ENCODE measurements at regions of chr15 and their contacts with region 1.

Region 1: DNA sequence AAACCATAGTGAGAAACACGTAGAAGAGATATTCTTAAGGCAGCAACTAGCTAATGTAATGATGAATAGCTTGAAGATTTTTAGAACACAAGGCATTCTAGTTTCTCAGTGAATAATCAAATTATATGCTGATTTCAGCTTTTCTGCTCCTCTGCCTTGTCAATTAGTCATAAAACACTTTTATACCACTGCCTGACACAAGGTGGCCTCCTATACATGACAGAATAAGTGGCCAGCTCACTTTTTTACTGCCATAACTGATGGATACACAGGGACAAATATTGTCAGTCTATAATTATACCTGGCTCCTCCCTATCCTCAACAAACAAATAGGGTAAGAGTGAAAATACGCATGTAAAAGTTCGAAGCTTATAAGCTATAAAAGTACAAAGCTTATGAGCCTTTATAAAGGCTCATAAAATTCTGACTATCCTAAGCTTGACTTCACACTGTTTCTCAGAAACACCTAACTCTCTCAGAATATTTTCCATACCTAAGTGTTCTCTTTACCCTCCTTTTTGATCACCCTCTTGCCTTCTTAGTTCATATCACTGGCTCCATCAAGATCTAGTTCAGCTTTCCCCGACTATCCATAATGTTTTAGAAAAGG is 81.6 kb downstream of the HERC1 start:
- DNase-seq: peak in 1 of 2 donors; percentile 32
- H3K4me3 ChIP-seq: no peak overlapping the region
- CTCF ChIP-seq: peak in 1 of 3 donors; percentile 55
- POLR2A ChIP-seq: no peak

Region 2: DNA sequence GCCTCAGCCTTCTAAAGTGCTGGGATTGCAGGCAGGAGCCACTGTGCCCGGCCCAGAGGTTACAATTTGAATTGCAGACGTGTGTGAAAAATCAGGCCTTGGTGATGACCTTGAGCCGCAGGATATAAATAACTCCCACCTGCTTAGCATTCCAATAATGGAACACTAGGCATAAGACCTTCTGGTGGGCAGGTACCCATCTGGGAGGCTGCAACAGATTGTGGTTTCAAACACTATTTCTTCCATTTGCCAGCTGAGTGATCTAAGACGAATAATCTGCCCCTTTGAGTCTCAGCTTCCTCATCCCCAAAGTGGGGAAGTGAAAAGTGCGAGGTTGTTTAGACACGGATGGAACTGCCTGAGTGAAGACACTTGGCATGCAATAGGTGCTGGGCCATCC is 129.3 kb after region 1 on chr15:
- intact Hi-C with region 1: loop called (anchors 10 kb)
- DNase-seq: no peak
- H3K4me3 ChIP-seq: no peak overlapping the region
- CTCF ChIP-seq: no peak
- POLR2A ChIP-seq: no peak

Region 3: GRCh38 chr15:64067564-64068030 is 315.4 kb after region 1 on chr15:
- intact Hi-C with region 1: loop called (anchors 5 kb)
- DNase-seq: peak; percentile 66 to 89
- H3K4me3 ChIP-seq: no peak overlapping the region
- CTCF ChIP-seq: peak in 1 of 3 donors; percentile 76
- POLR2A ChIP-seq: no peak

Region 4: DNA sequence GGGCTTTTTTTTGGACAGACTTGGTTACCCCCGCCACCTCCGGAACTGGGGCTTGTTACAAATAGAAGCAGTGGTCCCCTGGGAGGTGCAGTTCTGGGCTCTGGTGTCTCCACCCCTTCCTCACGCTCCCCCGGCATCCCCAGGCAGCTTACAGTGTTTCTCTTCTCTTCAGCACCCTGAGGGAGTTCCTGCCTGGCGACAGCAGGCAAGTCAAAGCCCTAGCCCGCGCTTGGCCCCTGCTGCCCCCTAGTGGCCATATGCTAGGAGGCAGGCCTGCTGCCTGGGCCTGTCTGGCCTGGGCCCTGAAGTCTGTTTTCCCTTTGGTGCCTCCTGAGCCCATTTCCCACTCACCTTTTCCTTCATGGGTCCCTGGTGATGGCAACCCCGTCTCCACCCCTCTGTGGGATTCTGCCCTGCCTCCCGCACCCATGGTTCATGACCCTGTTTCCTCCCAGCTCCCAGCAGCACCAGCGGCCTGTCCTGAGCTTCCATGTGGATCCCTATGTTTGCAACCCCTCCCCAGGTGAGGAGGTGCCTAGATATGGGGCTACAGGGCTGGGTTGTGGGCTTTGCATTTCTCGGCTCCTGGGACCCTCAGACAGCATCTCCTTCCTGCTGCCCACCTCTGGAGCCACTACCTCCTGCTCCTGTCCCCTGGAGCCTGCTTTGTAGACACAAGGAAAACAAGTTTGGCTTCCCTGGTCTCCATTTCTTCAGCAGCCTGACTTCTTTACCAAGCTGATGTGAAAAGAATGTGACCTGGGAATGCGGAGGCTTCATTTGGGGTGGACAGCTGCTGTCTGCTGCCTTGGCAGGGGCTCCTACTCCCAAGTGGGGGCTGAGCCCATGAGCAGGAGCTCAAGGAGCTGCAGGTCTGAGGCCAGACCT is 401.5 kb after region 1 on chr15:
- intact Hi-C with region 1: loop called (anchors 5 kb)
- DNase-seq: peak; percentile 83 to 97
- H3K4me3 ChIP-seq: no peak overlapping the region
- CTCF ChIP-seq: peak in 1 of 3 donors; percentile 69
- POLR2A ChIP-seq: no peak

Region 5: DNA sequence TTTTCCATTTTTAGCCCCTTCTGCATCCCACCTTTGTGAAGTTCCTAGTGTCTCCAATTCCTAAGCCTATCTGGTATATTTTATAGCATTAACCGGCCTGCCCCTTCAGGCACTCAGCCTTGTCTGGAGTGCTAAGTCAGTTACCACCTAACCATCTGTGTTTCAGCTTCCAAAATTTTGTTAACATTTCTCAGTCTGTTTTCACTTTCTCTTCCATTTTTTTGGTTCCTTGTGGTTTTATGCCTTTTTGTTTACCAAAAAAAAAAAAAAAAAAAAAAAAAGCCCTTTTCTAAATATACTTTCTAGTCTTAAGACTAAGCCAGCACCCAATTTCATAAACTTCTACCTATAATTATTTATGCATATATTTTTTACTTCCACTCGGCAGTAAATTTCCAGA is 511.4 kb after region 1 on chr15:
- intact Hi-C with region 1: no loop called
- DNase-seq: no peak
- H3K4me3 ChIP-seq: no peak overlapping the region
- CTCF ChIP-seq: no peak
- POLR2A ChIP-seq: no peak

Measured in lower leg skin (tissue), 4 donors.